ENCODE measurements at regions of chr5 and their contacts with region 1.

Region 1: DNA sequence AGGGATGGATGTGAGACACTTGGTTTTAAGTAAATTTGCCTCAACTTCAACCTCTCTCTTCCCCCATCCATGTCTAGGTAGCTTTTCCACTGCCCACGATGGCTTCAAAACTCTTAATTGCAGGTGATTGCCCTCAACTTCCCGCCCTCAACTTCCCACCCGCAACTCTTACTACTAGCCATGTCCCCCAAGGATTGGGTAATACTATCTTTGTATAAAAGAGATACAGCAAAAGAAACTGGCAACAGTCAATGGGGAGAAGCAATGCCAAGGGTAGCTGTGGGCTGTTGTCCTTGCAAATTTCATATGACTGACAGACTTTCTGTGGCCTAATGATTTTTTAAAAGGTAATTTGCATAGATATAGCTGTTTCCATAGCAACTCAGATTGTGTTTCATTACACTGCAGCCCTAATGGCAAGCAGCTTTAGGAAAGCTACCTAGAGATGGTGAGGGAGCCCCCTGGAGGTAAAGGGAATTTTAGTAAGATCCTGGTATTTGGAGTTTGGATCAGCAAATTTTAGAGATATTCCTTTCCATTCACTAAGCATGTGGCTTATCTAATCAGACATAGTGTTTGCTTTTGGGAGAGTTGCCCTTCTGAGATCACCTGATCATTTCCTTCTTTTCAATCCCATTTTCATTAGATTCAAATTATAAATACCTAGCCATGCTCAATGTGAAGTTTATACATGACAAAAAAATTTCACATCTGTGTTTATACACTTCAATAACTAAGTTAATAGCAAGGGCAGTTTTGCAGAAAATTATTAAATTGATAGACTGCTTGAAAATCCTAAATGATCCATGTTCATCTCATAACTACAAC is 421.6 kb upstream of the DAP start:
- DNase-seq: no peak
- H3K4me3 ChIP-seq: no peak overlapping the region
- H3K27ac ChIP-seq: no peak overlapping the region
- H3K4me1 ChIP-seq: no peaks in the 10 kb centered on the region
- H3K27me3 ChIP-seq: no peaks in the 10 kb centered on the region
- CTCF ChIP-seq: peak; percentile 10 to 48

Region 2: DNA sequence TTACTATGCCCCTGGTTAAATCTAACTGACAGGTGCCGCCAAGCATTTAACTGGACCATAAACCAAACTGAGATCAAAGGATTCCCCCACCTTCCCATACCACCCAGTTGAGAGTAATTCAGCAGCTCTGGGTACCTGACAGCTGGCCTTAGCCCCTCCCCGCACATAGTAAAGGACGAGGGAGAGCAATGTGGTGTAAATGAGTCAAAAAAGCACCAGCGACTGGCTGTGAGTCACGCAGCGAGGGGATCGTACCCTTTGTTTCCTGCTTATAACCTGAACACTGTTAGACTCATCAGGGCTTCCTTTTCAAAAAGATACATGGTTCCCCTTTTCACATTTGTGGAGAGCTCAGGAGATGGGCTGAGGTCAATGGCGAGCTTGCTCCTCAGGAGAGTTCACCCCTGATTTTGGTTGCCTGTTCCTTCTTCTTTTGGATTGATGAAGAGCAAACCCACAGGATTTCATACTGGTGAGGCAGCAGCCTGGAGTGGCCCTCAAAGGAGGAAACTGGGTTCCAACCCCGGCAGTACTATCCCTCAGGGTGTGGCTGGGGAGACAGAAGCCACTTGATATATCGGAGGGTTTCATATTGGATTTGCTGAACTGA is 547.3 kb before region 1 on chr5:
- CTCF ChIA-PET with region 1: no interaction called
- dilution Hi-C with region 1: no loop called
- in situ Hi-C with region 1: no loop called
- intact Hi-C with region 1: loop called (anchors 10 kb)
- DNase-seq: peak; percentile 14
- H3K4me3 ChIP-seq: no peak overlapping the region
- H3K27ac ChIP-seq: no peak overlapping the region
- H3K4me1 ChIP-seq: peaks cover 6% of the 10 kb centered on the region
- H3K27me3 ChIP-seq: no peaks in the 10 kb centered on the region
- CTCF ChIP-seq: no peak

Region 3: GRCh38 chr5:10695055-10695649 is 487.5 kb before region 1 on chr5:
- CTCF ChIA-PET with region 1: no interaction called
- dilution Hi-C with region 1: no loop called
- in situ Hi-C with region 1: no loop called
- intact Hi-C with region 1: loop called (anchors 5 kb)
- DNase-seq: peak; percentile 60
- H3K4me3 ChIP-seq: no peak overlapping the region
- H3K27ac ChIP-seq: no peak overlapping the region
- H3K4me1 ChIP-seq: peaks cover 32% of the 10 kb centered on the region
- H3K27me3 ChIP-seq: no peaks in the 10 kb centered on the region
- CTCF ChIP-seq: peak; percentile 80 to 87

Region 4: DNA sequence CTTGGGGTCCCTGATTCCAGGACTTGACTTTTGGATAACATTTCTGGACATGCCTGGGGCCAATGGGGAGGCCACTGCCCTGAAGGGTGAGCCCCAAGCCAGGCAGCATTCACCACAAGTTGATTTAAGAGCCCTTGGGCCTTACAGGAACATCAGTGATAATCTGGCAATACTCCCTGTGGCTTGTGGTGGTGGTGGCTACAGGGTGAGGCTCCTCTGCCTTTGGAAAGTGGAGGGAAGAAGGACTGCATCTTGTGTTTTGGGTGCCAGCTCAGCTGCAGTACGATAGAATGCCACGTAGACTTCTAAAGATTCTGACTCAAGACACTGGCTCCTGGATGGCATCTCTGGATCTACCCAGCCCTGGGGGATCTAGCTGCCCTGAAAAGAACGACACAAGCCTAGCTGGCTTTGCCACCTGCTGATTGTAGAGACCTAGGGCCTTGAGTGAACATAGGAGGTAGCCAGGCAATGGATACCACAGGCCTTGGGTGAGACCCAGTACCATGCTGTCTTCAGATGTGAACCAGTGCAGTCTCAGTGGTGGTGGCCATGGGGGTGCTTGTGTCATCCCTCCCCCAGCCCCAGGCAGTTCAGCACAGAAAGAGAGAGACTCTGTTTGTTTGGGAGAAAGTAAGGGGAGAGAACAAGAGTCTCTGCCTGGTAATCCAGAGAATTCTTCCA is 342.6 kb before region 1 on chr5:
- CTCF ChIA-PET with region 1: no interaction called
- dilution Hi-C with region 1: no loop called
- in situ Hi-C with region 1: no loop called
- intact Hi-C with region 1: no loop called
- DNase-seq: no peak
- H3K4me3 ChIP-seq: no peak overlapping the region
- H3K27ac ChIP-seq: no peak overlapping the region
- H3K4me1 ChIP-seq: no peaks in the 10 kb centered on the region
- H3K27me3 ChIP-seq: peaks cover 3% of the 10 kb centered on the region
- CTCF ChIP-seq: no peak

Region 5: GRCh38 chr5:10863763-10864383 is 318.8 kb before region 1 on chr5:
- CTCF ChIA-PET with region 1: no interaction called
- dilution Hi-C with region 1: no loop called
- in situ Hi-C with region 1: no loop called
- intact Hi-C with region 1: loop called (anchors 1 kb)
- DNase-seq: peak; percentile 17
- H3K4me3 ChIP-seq: no peak overlapping the region
- H3K27ac ChIP-seq: no peak overlapping the region
- H3K4me1 ChIP-seq: no peaks in the 10 kb centered on the region
- H3K27me3 ChIP-seq: no peaks in the 10 kb centered on the region
- CTCF ChIP-seq: peak; percentile 80 to 87

Region 6: GRCh38 chr5:11212706-11213105 is 30.1 kb after region 1 on chr5:
- CTCF ChIA-PET with region 1: no interaction called
- dilution Hi-C with region 1: loop called (anchors 5 kb)
- in situ Hi-C with region 1: no loop called
- intact Hi-C with region 1: no loop called
- DNase-seq: no peak
- H3K4me3 ChIP-seq: no peak overlapping the region
- H3K27ac ChIP-seq: no peak overlapping the region
- H3K4me1 ChIP-seq: no peaks in the 10 kb centered on the region
- H3K27me3 ChIP-seq: no peaks in the 10 kb centered on the region
- CTCF ChIP-seq: no peak

Region 7: DNA sequence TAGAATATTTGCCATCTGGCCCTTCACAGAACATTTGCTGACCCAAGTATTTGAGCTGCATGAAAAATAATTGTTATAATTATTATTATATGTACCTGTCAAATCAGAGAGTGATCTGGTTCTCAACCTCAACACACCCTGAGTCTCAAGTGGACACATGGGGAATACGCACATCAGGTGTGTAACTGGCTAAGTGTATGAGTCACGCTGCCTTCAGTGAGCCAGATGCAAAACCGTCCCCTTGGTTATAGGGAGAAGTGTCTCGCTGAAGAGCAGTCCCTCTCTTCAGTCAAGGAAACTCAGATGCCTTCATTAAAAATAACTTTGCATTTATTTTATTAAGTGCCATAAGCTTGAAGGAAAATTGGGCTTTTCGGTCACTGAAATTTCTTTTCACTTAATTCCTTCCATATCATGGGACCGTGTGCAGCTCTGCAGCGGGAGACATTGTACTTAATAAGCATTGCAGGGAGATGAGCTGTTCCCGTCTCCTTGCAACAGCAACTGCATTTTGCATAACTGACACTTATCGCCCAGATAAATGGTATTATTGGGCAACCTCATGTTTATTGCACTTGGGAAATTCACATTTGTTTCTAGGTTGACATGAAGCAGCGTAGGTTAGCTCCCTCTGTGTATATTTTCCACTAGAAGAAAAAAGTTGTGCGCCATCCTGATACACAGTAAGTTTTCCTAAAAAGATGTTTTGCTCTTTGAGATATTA is 90.7 kb after region 1 on chr5:
- CTCF ChIA-PET with region 1: no interaction called
- dilution Hi-C with region 1: no loop called
- in situ Hi-C with region 1: no loop called
- intact Hi-C with region 1: no loop called
- DNase-seq: no peak
- H3K4me3 ChIP-seq: no peak overlapping the region
- H3K27ac ChIP-seq: no peak overlapping the region
- H3K4me1 ChIP-seq: no peaks in the 10 kb centered on the region
- H3K27me3 ChIP-seq: no peaks in the 10 kb centered on the region
- CTCF ChIP-seq: no peak